ENCODE measurements at regions of chr15 and their contacts with region 1.

Region 1: DNA sequence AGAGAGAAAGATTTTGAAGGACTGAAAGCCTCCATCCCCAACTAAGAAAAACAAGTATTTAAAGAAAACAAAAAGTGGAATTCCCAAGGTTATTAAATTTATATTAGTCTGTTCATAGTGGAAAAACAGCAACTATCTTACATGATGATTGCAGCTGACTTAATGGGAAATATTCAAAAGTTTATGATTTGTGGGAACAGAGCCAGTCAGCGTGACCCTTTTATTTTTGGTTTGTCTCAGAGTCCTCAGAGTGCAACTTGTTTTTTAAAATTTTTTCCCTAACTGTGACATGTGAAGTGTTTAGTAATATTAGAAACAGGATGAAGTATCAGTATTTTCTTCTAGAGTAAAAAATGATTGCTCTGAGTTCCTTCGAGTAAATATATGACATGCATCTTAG is 441.9 kb upstream of the MCTP2 start:
- DNase-seq: no peak
- ATAC-seq: no peak
- H3K4me3 ChIP-seq: no peak overlapping the region
- H3K4me3 Mint-ChIP-seq: no peak overlapping the region
- H3K27ac ChIP-seq: no peak overlapping the region
- H3K27ac Mint-ChIP-seq: no peak overlapping the region
- H3K4me1 ChIP-seq: no peaks in the 10 kb centered on the region
- H3K4me1 Mint-ChIP-seq: no peaks in the 10 kb centered on the region
- H3K27me3 ChIP-seq: no peaks in the 10 kb centered on the region
- H3K27me3 Mint-ChIP-seq: peaks cover 31% of the 10 kb centered on the region
- CTCF ChIP-seq: no peak

Region 2: DNA sequence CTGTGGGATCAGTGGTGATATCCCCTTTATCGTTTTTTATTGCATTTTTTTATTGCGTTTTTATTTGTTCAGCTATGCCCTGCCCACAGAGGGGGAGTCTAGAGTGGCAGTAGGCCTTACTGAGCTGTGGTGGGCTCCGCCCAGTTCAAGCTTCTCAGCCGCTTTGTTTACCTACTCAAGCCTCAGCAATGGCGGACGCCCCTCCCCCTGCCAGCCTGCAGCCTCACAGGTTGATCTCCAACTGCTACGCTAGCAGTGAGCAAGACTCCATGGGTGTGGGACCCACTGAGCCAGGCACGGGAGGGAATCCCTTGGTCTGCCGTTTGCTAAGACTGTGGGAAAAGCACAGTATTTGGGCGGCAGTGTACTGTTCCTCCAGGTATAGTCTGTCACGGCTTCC is 58.7 kb before region 1 on chr15:
- CTCF ChIA-PET with region 1: no interaction called
- POLR2A ChIA-PET with region 1: no interaction called
- intact Hi-C with region 1: loop called in 1 of 2 experiments (anchors 5 kb)
- DNase-seq: no peak
- ATAC-seq: no peak
- H3K4me3 ChIP-seq: no peak overlapping the region
- H3K4me3 Mint-ChIP-seq: no peak overlapping the region
- H3K27ac ChIP-seq: no peak overlapping the region
- H3K27ac Mint-ChIP-seq: no peak overlapping the region
- H3K4me1 ChIP-seq: no peaks in the 10 kb centered on the region
- H3K4me1 Mint-ChIP-seq: no peaks in the 10 kb centered on the region
- H3K27me3 ChIP-seq: no peaks in the 10 kb centered on the region
- H3K27me3 Mint-ChIP-seq: no peaks in the 10 kb centered on the region
- CTCF ChIP-seq: no peak

Measured in CD4-positive, alpha-beta T cell (primary cell).